ENCODE measurements at regions of chr10 and their contacts with region 1.

Region 1: DNA sequence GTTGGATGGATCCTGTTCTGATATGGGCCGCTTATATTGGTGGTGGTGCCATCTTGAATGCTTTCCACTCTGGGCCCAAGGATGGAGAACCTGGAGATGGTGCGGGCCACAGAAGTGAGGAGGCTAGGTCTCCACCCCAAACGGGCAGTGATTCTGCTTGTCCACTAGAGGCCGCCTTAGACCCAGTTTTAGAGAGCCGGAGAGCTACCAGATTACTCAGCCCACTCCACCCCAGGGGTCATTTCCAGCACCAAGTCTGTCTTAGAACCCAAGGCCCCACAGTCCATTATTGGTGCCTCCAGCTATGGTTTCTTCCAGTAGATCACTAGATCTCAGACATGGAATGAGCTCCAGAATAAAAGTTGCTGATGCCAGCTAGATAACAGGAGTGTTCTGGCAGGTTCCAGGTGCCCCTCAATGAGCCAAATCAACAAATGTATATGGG is 11.8 kb upstream of the CAMK2G start:
- DNase-seq: peak; percentile 76
- ATAC-seq: peak; percentile 79 to 83

Region 2: GRCh38 chr10:73591935-73592699 is 294.0 kb before region 1 on chr10:
- intact Hi-C with region 1: no loop called
- DNase-seq: peak; percentile 51
- ATAC-seq: peak; percentile 69 to 77

Region 3: DNA sequence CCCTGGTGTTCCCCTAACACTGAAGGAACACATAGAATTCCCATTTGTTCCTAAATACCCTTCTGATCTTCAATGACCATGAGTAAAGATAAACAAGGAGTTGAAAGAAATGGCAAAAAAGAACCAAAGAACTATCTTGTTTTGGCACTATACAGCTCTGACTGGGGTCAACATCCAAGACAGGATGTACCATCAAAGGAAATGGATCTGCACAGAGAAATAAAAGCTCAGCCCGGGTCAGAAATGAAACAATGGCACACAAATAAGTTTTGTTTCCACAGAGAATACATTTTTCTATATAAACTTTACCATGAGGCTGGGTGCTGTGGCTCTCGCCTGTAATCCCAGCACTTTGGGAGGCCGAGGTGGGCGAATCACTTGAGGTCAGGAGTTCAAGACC is 277.0 kb before region 1 on chr10:
- intact Hi-C with region 1: no loop called
- DNase-seq: no peak
- ATAC-seq: no peak

Region 4: GRCh38 chr10:73940634-73941221 is 54.6 kb after region 1 on chr10:
- intact Hi-C with region 1: loop called (anchors 1 to 5 kb)
- DNase-seq: peak; percentile 92
- ATAC-seq: peak; percentile 96 to 98

Region 5: DNA sequence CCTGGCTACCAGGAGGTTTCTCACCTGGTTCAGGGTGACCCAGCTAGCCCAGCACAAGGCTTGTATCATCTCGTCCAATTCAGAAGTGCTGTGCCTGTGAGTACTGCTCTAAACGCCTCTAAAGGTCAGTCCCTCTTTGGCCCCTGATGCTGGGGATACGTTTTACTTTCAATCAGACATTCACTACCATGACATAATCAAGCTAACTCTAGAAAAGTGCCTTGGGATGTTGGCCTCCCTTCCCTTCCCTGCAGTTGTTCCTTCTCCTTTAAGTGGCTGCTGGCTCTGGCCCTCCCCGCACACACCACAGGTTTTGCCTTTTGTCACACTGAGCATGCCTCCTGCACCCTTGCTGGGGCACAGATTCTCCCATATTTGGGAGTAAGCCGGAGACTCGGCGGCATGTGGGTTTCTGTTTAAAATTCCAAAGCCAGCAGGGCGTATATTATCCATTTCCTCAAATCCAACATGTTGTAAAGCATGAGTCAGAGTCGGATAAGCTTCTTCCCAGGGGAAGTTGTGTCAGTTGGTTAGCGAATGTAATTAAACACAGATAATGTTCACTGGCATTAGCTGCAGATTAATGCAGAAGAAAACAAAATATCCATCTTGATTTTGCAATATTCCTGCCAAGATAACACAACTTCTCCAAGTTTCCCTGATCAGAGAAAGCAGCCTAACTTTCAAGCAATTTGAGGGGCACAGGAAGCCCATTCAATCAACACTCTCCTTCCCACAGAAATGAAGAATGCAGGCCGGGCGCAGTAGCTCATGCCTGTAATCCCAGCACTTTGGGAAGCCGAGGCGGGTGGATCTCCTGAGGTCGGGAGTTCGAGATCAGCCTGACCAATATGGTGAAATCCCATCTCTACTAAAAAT is 80.0 kb after region 1 on chr10:
- intact Hi-C with region 1: loop called in 1 of 2 experiments (anchors 1 kb)
- DNase-seq: peak; percentile 86
- ATAC-seq: peak; percentile 95 to 96

Region 6: GRCh38 chr10:74058658-74059057 is 172.6 kb after region 1 on chr10:
- intact Hi-C with region 1: loop called in 1 of 2 experiments (anchors 5 kb)
- DNase-seq: no peak
- ATAC-seq: peak in 1 of 2 donors; percentile 59

Measured in left cardiac atrium (tissue), 4 donors.